ENCODE measurements at regions of chr15 and their contacts with region 1.

Region 1: DNA sequence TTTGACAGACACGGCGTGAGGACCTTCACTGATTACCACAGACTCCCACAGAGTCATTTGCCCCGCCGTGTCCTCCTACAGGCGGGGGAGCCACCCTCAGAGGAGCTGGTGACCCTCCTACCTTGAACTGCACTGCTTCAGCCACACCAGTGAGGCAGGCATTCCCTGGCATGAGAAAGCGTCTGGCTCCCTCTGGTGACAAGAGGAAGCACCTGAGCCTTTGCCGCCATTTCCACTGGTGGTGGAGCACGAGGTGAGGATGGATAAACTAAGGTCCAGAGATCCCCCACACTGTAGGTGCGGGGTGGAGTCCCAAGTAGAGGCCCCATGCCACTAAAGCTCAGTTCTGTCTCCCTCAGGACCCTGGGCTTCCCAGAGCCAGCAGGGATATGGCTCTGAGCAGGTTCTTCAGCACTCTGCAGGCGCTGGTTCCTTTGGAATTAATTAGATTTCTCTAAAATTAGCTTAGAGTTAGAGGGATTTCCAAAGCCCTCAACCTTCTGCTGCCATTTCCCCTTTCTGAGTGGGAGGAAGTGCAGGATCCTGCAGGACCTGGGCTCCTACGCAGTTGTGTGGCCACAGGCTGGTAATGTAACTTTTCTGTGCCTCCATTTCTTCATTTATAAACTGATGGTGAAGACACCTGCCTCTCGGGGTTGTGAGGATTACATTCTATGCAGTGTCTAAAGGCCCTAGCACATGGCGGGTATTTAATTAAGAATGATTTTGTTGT is 224.0 kb downstream of the SLCO3A1 start:
- DNase-seq: peak; percentile 77
- H3K4me3 Mint-ChIP-seq: no peak overlapping the region
- H3K27ac Mint-ChIP-seq: no peak overlapping the region
- H3K4me1 Mint-ChIP-seq: peaks cover 33% of the 10 kb centered on the region
- H3K27me3 Mint-ChIP-seq: no peaks in the 10 kb centered on the region

Region 2: DNA sequence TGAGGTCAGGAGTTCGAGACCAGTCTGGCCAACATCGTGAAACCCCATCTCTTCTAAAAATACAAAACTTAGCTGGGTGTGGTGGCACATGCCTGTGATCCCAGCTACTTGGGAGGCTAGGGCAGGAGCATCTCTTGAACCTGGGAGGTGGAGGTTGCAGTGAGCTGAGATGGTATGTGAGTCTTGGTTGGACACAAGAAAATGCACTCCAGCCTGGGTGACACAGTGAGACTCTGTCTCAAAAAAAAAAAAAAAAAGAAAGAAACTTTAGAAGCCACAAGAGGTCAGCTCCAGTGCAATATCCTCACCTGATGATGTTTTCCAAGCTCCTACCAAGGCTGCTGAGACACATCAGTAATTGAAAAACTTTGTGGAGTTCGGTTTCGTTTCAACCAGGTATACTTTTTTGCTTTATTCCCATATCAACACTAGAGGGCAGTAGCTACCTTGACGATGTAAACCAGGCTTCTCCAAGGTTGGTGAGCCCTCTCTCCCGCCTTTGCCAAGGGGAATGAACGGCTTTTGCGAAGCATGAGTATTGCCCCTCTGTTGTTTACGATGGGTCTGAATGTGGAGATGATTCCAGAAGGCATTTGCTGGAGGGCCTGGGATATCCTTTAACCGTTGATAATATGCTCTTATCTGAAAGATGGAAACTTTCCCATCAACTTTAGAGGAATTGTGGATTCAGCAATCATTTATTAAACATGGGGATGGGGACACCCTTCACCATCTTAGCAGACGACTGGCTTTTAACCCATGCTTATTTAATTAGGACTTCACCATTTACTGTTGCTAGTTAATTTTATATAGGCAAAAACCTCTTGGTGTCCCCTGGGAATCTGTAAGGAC is 774.7 kb before region 1 on chr15:
- CTCF ChIA-PET with region 1: interaction called, 20 read pairs
- DNase-seq: peak; percentile 52
- H3K4me3 Mint-ChIP-seq: no peak overlapping the region
- H3K27ac Mint-ChIP-seq: peak overlapping the region; percentile 66
- H3K4me1 Mint-ChIP-seq: peaks cover 66% of the 10 kb centered on the region
- H3K27me3 Mint-ChIP-seq: peaks cover 44% of the 10 kb centered on the region

Region 3: GRCh38 chr15:91852741-91853510 is 224.6 kb before region 1 on chr15:
- CTCF ChIA-PET with region 1: interaction called, 61 read pairs
- DNase-seq: peak; percentile 77
- H3K4me3 Mint-ChIP-seq: peak overlapping the region; percentile 88
- H3K27ac Mint-ChIP-seq: peak overlapping the region; percentile 89
- H3K4me1 Mint-ChIP-seq: peaks cover 70% of the 10 kb centered on the region
- H3K27me3 Mint-ChIP-seq: peaks cover 7% of the 10 kb centered on the region

Region 4: GRCh38 chr15:91929509-91929908 is 148.0 kb before region 1 on chr15:
- CTCF ChIA-PET with region 1: no interaction called
- DNase-seq: no peak
- H3K4me3 Mint-ChIP-seq: no peak overlapping the region
- H3K27ac Mint-ChIP-seq: no peak overlapping the region
- H3K4me1 Mint-ChIP-seq: peaks cover 9% of the 10 kb centered on the region
- H3K27me3 Mint-ChIP-seq: no peaks in the 10 kb centered on the region

Region 5: GRCh38 chr15:92091155-92091734 is 13.7 kb after region 1 on chr15:
- CTCF ChIA-PET with region 1: interaction called, 28 read pairs
- DNase-seq: peak; percentile 31
- H3K4me3 Mint-ChIP-seq: no peak overlapping the region
- H3K27ac Mint-ChIP-seq: no peak overlapping the region
- H3K4me1 Mint-ChIP-seq: peaks cover 18% of the 10 kb centered on the region
- H3K27me3 Mint-ChIP-seq: no peaks in the 10 kb centered on the region

Region 6: DNA sequence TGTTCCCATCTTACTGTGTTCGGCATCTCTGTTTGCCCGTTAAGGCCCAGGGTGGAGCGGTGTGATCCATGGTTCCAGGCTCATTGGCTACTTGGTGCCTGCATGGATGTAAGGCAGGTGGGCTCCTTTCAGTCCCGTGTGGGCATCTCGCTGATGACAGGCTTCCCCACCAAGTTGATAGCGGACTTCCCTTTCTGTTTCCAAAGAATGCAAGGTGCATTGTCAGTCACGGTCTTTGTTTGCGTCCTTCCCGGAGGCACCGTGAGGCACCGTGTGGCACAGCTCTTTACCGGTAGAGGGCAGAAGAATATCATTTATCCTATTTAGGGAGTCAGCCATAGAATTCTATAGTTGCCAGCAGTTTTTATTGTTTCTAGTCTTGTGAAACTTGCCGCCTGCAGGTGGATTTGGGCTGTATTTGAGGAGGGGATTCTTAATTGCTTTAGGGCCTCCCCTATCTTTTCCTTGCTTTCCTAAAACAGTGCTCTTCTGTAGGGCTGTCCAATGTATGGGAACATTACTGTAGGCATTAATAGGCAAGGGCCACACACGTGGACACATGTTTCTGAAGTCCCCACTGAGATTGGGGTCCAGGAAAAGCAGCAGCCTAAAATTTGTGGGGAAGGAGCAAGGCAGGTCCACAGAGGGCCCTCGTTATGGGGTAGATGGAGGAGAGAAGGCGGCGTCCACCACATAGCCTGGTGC is 20.1 kb after region 1 on chr15:
- CTCF ChIA-PET with region 1: interaction called, 13 read pairs
- DNase-seq: peak; percentile 62
- H3K4me3 Mint-ChIP-seq: no peak overlapping the region
- H3K27ac Mint-ChIP-seq: peak overlapping the region; percentile 78
- H3K4me1 Mint-ChIP-seq: peaks cover 61% of the 10 kb centered on the region
- H3K27me3 Mint-ChIP-seq: no peaks in the 10 kb centered on the region